Panc1 (cell line): ENCODE measurements at regions of chr6 and their contacts with region 1.

Region 1: DNA sequence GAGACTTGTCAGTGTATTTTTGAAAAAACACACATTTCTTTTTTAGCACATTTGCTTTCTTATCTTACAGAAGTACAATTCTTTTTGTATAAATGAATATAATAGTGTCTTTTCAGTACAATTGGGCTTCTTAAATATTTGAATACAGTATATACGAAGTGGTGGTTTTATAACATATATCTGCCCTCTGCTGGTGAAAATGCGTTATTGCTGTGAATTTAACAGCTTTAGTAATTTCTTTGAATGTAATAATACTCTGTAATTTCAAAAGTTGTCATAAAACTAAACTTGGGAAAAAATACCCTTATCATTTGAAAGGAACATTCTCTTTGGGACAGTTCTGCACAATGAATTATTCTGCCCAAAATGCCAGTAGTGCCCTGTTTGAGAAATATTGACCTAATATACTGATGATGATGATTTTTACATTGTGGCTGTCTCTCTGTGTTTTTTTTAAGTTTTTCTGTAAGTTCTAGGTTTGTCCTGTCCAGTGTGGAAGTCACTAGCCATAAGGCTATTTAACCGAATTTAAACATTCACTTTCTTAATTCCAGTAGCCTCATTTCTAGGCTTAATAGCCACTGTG is 19.0 kb downstream of the SMAP1 start:
- DNase-seq: no peak
- ATAC-seq: 0 out of 2 replicates have a peak, but pooled peaks have one; percentile 65
- H3K4me3 ChIP-seq: no peak overlapping the region
- H3K27ac ChIP-seq: no peak overlapping the region
- H3K4me1 ChIP-seq: peaks cover 14% of the 10 kb centered on the region; the same call in 1 of the 2 replicates
- H3K27me3 ChIP-seq: no peaks in the 10 kb centered on the region
- CTCF ChIP-seq: peak; percentile 71; the same call in 1 of the 2 replicates

Region 2: GRCh38 chr6:70304616-70305015 is 382.0 kb before region 1 on chr6:
- CTCF ChIA-PET with region 1: no interaction called
- POLR2A ChIA-PET with region 1: no interaction called
- in situ Hi-C with region 1: no loop called
- intact Hi-C with region 1: loop called (anchors 5 kb)
- DNase-seq: no peak
- ATAC-seq: no peak
- H3K4me3 ChIP-seq: no peak overlapping the region
- H3K27ac ChIP-seq: no peak overlapping the region
- H3K4me1 ChIP-seq: no peaks in the 10 kb centered on the region
- H3K27me3 ChIP-seq: peaks cover 10% of the 10 kb centered on the region
- CTCF ChIP-seq: no peak

Region 3: DNA sequence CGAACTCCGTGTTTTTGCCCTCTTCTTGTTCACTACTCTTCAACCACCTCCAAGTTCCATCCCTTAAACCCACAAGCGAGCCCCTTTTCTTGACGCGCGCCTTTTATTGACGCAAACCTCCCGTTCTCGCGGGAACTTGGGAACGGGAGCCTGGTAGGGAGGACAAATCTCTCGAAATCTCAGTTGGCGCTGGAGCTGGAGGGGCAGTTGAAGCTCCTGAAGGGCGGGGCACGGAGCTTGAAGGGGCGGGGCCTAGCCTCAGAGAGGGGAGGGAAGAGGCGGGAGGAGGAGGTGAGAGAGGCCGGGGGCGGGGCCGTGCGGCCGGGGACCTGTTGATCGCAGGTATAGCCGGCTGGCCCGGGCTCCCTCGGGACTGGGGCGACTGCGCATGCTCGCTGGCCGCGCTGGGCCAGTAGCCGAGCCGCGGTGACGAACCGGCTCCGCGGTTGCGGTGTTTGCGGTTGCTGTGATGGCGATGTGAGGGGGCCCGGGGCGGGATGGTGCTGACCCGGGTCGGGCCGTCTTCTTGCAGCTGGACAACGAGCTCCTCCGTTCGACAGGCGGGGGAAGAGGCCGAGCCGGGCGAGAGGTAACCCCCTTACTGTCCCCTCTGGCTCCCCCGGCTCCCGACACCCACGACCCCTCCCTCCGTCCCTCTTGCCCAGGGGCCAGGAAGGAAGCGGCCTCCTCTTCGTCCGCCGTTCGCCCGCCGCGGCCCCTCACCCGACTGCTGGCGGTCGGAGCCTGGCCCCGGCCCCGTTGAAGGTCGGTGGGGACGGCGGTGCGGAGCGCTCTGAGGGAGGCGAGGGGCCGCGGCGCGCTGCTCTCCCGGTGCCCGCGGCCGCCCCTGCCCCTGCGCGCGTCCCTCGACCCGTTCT is 273.3 kb before region 1 on chr6 and contains the start of gene FAM135A:
- CTCF ChIA-PET with region 1: no interaction called
- POLR2A ChIA-PET with region 1: no interaction called
- in situ Hi-C with region 1: no loop called
- intact Hi-C with region 1: loop called (anchors 10 kb)
- DNase-seq: peak; percentile 97
- ATAC-seq: peak; percentile 97
- H3K4me3 ChIP-seq: peak within 1 kb of the TSS; percentile 95 to 96
- H3K27ac ChIP-seq: peak within 1 kb of the TSS; percentile 97
- H3K4me1 ChIP-seq: peaks cover 5% of the 10 kb centered on the region; the same call in 1 of the 2 replicates
- H3K27me3 ChIP-seq: no peaks in the 10 kb centered on the region
- CTCF ChIP-seq: no peak
- total RNA-seq, gene FAM135A: 31.5 TPM

Region 4: DNA sequence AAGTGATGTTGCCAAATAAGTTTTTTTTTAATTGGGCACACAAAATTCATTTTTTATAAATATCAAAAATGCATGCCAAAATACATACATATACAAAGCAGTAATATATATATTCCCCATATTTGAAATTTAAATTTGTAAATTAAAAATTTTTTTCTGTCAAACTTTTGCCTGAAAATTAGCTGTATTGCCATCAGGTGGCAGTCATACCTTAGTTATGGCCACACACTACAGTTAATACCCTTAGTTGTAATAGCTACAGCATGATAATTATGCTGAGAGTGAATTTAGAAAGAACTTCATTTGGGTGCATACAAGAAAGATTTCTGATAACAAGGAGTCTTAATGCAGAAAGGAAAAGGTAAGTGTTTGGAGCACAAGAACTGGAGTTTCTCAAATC is 166.1 kb before region 1 on chr6:
- CTCF ChIA-PET with region 1: interaction called, 3 read pairs
- POLR2A ChIA-PET with region 1: no interaction called
- in situ Hi-C with region 1: no loop called
- intact Hi-C with region 1: loop called (anchors 1 kb)
- DNase-seq: peak; percentile 8
- ATAC-seq: no peak
- H3K4me3 ChIP-seq: no peak overlapping the region
- H3K27ac ChIP-seq: no peak overlapping the region
- H3K4me1 ChIP-seq: no peaks in the 10 kb centered on the region
- H3K27me3 ChIP-seq: no peaks in the 10 kb centered on the region
- CTCF ChIP-seq: peak; percentile 55; the same call in 1 of the 2 replicates

Region 5: DNA sequence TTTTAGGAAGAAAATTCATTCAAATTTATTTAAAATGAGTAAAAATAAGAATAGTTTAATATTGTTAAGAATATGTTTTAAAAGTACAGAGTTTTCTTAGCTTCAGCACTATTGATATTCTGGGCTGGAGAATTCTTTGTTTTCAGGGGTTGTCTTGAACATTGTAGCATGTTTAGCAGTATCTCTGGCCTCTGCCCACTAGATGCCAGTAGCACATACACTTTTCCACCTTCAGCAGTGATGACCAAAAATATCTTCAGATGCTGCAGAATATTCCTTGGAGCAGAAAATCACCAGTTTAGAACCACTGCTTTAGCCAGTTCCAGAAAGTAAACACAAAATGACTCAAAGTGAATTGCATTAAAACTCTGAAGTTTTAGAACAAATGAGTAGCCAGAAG is 139.3 kb before region 1 on chr6:
- CTCF ChIA-PET with region 1: interaction called, 5 read pairs
- POLR2A ChIA-PET with region 1: no interaction called
- in situ Hi-C with region 1: no loop called
- intact Hi-C with region 1: loop called (anchors 1 kb)
- DNase-seq: no peak
- ATAC-seq: 0 out of 2 replicates have a peak, but pooled peaks have one; percentile 74
- H3K4me3 ChIP-seq: no peak overlapping the region
- H3K27ac ChIP-seq: no peak overlapping the region
- H3K4me1 ChIP-seq: no peaks in the 10 kb centered on the region
- H3K27me3 ChIP-seq: no peaks in the 10 kb centered on the region
- CTCF ChIP-seq: peak; percentile 63

Region 6: GRCh38 chr6:70894001-70894400 is 207.4 kb after region 1 on chr6:
- CTCF ChIA-PET with region 1: no interaction called
- POLR2A ChIA-PET with region 1: no interaction called
- in situ Hi-C with region 1: no loop called
- intact Hi-C with region 1: no loop called
- DNase-seq: no peak
- ATAC-seq: no peak
- H3K4me3 ChIP-seq: no peak overlapping the region
- H3K27ac ChIP-seq: no peak overlapping the region
- H3K4me1 ChIP-seq: no peaks in the 10 kb centered on the region
- H3K27me3 ChIP-seq: peaks cover 13% of the 10 kb centered on the region; the same call in 1 of the 2 replicates
- CTCF ChIP-seq: no peak